Endothelial cell of umbilical vein (primary cell): ENCODE measurements at regions of chr6 and their contacts with region 1.

Region 1: DNA sequence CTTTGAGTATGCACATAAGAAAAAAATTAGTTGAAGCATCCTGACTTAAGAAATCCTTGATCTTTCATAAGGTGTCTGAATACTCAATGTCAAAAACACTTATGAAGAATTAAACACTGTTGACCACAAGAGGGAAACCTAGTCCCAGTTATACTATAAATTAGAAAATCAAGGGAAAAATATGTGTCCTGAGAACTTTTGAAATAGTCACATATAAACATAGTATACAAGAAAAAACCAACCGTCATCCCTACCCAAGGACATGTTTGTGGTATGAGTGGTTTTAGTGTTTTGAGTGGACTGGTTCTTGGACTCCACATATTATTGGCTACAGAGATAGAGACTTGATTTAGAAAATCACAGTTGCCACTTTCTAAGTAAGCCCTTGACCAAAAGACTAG is 7.6 kb upstream of the HLA-DRA start:
- DNase-seq: peak; percentile 51
- H3K4me3 ChIP-seq: no peak overlapping the region
- H3K27ac ChIP-seq: no peak overlapping the region
- H3K4me1 ChIP-seq: no peaks in the 10 kb centered on the region
- H3K27me3 ChIP-seq: peaks cover 20 to 27% of the 10 kb centered on the region in 2 experiments
- CTCF ChIP-seq: peak in 1 of 2 donors; percentile 12
- POLR2A ChIP-seq: no peak

Region 2: DNA sequence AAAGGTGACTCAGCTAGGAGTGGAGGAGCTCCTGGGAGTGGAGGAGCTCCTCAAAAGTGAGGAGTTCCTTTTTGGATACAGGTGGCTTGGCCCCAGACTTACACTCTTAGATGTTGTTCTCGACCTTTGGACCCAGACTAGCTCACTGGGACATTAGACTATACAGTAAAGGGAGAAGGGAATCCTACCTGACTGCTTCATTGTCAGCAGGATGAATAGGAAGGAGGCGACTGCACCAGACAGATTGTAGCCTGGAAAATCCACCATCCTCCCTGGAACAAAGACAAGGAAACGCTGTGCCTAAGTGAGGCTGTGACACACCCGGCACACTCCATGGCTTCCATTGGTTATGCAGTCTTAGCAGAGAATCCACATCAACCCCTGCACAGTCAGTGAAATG is 25.2 kb before region 1 on chr6 and contains the start of gene BTNL2:
- CTCF ChIA-PET with region 1: no interaction called
- POLR2A ChIA-PET with region 1: no interaction called
- dilution Hi-C with region 1: no loop called
- intact Hi-C with region 1: no loop called
- DNase-seq: no peak
- H3K4me3 ChIP-seq: no peak within 1 kb of the TSS
- H3K27ac ChIP-seq: no peak within 1 kb of the TSS
- H3K4me1 ChIP-seq: no peaks in the 10 kb centered on the region
- H3K27me3 ChIP-seq: peaks cover 44 to 59% of the 10 kb centered on the region in 2 experiments
- CTCF ChIP-seq: no peak
- POLR2A ChIP-seq: no peak
- total RNA-seq, gene BTNL2: not detected in 2 replicates

Region 3: DNA sequence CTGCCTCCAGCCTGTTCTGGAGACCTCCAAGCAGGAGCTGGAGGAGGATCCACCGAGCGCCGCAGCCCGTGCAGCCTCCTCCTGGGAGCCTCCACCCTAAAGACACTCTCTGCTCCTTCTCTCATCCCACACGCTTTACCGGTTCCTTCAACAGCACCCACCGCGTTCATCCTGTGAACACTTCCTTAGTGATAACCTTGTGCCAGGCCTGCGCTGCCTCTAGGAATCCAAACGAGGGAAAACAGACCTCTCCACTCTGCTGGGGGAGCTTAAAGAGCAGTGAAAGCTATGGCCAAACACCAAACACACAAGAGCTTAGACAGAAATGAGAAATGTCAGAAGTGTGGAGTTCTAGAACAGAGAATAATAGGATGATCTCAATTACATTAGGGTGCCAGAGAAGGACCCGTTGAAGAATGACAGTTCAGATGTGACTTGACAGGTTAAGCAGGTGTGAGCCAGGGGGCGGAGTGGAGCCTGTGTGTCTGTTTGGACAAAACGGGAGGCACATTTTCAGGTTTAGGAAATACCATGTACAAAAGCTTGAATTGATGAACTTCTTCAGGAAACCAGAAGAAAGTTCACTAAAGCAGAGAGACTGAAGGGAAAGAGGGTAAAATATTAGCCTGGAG is 126.5 kb after region 1 on chr6:
- CTCF ChIA-PET with region 1: no interaction called
- POLR2A ChIA-PET with region 1: no interaction called
- dilution Hi-C with region 1: no loop called
- intact Hi-C with region 1: no loop called
- DNase-seq: no peak
- H3K4me3 ChIP-seq: no peak overlapping the region
- H3K27ac ChIP-seq: no peak overlapping the region
- H3K4me1 ChIP-seq: no peaks in the 10 kb centered on the region
- H3K27me3 ChIP-seq: peaks cover 2 to 3% of the 10 kb centered on the region in 2 experiments
- CTCF ChIP-seq: no peak
- POLR2A ChIP-seq: no peak

Region 4: DNA sequence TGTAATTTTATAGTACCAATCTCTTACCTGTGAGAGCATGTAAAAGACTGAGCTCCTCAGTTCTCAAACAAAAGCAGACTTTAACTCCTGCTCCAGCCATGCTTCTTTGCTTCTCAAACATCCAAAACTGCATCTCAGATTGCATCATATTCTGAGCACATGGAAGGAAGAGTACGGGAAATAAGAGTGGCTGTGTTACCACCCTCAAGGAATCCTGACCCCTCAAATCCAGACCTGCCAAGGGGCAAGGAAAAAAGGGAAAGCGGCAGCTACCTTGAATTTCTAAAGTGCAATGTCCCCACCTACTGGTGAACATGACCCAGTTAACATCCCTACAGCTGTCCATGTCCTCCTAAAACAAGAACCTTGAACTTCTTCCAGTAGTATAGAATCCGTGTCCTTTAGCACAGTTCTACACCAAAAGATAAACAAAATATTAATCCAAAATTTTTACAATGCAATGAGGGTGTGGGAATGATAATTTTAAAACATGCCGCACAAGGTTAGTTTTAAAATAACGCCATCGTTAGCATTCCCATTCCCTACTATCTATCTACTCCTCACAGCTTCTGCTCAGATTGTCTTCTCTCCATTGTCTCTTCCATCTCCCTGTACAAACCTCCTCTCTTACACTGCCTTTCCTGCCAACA is 268.5 kb after region 1 on chr6:
- CTCF ChIA-PET with region 1: interaction called, 40 read pairs
- POLR2A ChIA-PET with region 1: no interaction called
- dilution Hi-C with region 1: no loop called
- intact Hi-C with region 1: loop called (anchors 1 kb)
- DNase-seq: peak; percentile 67
- H3K4me3 ChIP-seq: no peak overlapping the region
- H3K27ac ChIP-seq: no peak overlapping the region
- H3K4me1 ChIP-seq: peaks cover 6% of the 10 kb centered on the region
- H3K27me3 ChIP-seq: peaks cover 15 to 40% of the 10 kb centered on the region in 2 experiments
- CTCF ChIP-seq: peak; percentile 41 to 64
- POLR2A ChIP-seq: no peak

Region 5: DNA sequence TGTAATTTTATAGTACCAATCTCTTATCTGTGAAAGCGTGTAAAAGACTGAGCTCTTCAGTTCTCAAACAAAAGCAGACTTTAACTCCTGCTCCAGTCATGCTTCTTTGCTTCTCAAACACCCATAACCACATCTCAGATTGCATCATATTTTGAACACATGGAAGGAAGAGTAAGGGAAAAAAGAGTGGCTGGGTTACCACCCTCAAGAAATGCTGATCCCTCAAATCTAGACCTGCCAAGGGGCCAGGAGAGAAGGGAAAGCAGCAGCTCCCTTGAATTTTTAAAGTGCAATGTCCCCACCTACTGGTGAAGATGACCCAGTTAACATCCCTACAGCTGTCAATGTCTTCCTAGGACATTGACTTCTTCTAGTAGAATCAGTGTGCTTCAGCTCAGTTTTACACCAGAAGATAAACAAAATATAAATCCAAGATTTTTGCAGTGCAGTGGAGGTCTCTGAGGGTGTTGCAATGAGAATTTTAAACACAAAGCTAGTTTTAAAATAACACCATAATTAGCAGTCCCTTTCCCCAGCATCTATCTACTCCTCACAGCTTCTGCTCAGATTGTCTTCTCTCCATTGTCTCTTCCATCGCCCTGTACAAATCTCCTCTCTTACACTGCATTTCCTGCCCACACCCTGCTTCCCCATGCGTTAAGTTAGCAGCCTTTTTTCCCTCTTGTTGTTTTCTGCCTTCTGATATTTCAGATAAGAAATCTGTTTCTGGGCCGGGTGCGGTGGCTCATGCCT is 353.9 kb after region 1 on chr6:
- CTCF ChIA-PET with region 1: interaction called, 45 read pairs
- POLR2A ChIA-PET with region 1: no interaction called
- dilution Hi-C with region 1: no loop called
- intact Hi-C with region 1: no loop called
- DNase-seq: peak; percentile 58
- H3K4me3 ChIP-seq: no peak overlapping the region
- H3K27ac ChIP-seq: no peak overlapping the region
- H3K4me1 ChIP-seq: no peaks in the 10 kb centered on the region
- H3K27me3 ChIP-seq: peaks cover 8 to 50% of the 10 kb centered on the region in 2 experiments
- CTCF ChIP-seq: peak; percentile 49 to 51
- POLR2A ChIP-seq: no peak